ENCODE measurements at regions of chr11 and their contacts with region 1.

Region 1: GRCh38 chr11:73982969-73983740 is 512 bp upstream of the UCP2 start:
- DNase-seq: peak; percentile 89
- ATAC-seq: peak; percentile 85
- H3K4me3 ChIP-seq: peak overlapping the region; percentile 79
- H3K27ac ChIP-seq: peak overlapping the region; percentile 85
- H3K4me1 ChIP-seq: peaks cover 29% of the 10 kb centered on the region
- H3K27me3 ChIP-seq: no peaks in the 10 kb centered on the region
- CTCF ChIP-seq: no peak
- EP300 ChIP-seq: peak in 1 of 2 experiments; percentile 4; a peak in 1 of 4 replicates
- POLR2A ChIP-seq: peak; percentile 97
- RAD21 ChIP-seq: no peak

Region 2: GRCh38 chr11:73995247-73995646 is 12.1 kb after region 1 on chr11:
- CTCF ChIA-PET with region 1: interaction called, 9 read pairs
- POLR2A ChIA-PET with region 1: interaction called, 41 read pairs
- RAD21 ChIA-PET with region 1: interaction called, 47 read pairs
- SMC1A ChIA-PET with region 1: interaction called, 38 read pairs
- in situ Hi-C with region 1: no loop called
- intact Hi-C with region 1: no loop called
- DNase-seq: no peak
- ATAC-seq: peak; percentile 73
- H3K4me3 ChIP-seq: no peak overlapping the region
- H3K27ac ChIP-seq: peak overlapping the region; percentile 57
- H3K4me1 ChIP-seq: peaks cover 68% of the 10 kb centered on the region
- H3K27me3 ChIP-seq: no peaks in the 10 kb centered on the region
- CTCF ChIP-seq: no peak
- EP300 ChIP-seq: peak; percentile 36 to 77; a peak in 2 of 4 replicates
- POLR2A ChIP-seq: no peak
- RAD21 ChIP-seq: no peak

Region 3: DNA sequence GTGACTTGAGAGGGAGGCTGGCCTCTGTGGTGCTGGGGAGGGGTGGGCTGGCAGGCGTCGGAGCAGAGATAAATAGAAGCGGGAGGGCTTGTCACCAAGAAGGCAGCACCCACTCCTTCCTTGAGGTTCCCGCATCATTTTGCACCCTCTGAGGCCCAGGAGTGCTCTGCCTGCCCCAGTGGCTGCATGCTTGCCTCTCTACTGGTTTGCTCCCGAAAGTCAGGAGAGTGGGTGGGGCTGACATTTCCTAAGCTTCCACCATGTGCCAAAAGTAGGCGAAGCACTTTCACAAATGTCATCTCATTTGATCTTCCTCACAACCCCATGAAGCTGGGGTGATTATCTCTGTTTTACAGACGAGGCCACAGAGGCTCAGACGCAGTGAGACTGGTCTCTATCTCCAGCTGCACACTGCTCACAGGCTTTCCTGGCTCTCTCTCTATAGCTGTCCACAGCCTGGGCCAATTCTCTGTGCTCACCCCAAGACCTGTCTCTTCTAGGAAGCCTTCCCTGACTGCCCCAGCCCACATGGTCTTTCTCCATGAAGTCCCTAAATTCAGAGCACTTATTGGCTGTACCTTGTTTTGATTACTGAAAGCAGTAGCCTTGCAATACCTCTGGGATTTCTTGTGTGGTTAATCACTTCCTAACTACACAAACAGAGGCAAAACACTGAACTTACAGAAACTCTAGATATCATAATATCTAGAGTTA is 28.4 kb after region 1 on chr11:
- CTCF ChIA-PET with region 1: interaction called, 11 read pairs
- POLR2A ChIA-PET with region 1: interaction called, 3 read pairs
- RAD21 ChIA-PET with region 1: interaction called, 5 read pairs
- SMC1A ChIA-PET with region 1: interaction called, 19 read pairs
- in situ Hi-C with region 1: no loop called
- intact Hi-C with region 1: no loop called
- DNase-seq: peak; percentile 79
- ATAC-seq: peak; percentile 93
- H3K4me3 ChIP-seq: no peak overlapping the region
- H3K27ac ChIP-seq: peak overlapping the region; percentile 56
- H3K4me1 ChIP-seq: peaks cover 20% of the 10 kb centered on the region
- H3K27me3 ChIP-seq: no peaks in the 10 kb centered on the region
- CTCF ChIP-seq: no peak
- EP300 ChIP-seq: peak; percentile 63 to 94; a peak in 3 of 4 replicates
- POLR2A ChIP-seq: no peak
- RAD21 ChIP-seq: no peak

Region 4: DNA sequence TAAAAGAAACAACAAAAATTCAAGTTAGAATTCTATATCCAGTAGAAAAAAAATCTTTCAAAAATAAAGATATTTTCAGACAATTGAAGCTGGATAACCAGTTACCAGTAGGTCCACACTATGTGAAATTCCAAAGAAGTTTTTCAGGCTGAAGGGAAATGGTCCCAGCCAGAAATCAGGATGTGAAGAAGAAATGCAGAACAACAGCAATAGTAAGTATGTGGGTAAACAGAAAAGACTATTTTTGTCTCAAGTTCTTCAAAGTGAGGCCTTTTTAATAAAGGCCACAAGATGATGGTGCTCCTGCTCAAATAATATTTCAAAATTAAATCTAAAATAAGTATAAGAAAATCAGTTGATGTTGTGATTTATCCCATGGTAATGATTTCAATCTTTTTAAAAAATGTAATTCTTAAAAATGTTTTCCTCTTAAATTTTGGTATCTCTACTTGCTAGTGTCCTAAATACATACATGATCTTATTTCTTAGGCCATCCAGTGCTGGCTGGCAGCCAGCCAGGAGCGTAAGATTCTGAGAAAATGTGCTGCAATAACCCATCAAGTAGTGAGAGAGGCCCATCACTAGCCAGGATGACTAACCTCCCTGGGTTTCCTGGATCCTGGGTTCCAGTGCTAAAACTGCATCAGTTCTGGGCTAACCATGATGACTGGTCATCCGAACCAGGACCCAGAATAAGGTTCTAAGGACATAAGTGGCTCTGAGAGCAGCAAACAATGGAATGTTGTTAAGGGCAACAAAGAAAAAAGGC is 41.3 kb after region 1 on chr11:
- CTCF ChIA-PET with region 1: interaction called, 5 read pairs
- POLR2A ChIA-PET with region 1: interaction called, 20 read pairs
- RAD21 ChIA-PET with region 1: interaction called, 31 read pairs
- SMC1A ChIA-PET with region 1: interaction called, 49 read pairs
- in situ Hi-C with region 1: no loop called
- intact Hi-C with region 1: loop called (anchors 5 kb)
- DNase-seq: no peak
- ATAC-seq: no peak
- H3K4me3 ChIP-seq: no peak overlapping the region
- H3K27ac ChIP-seq: no peak overlapping the region
- H3K4me1 ChIP-seq: peaks cover 19% of the 10 kb centered on the region
- H3K27me3 ChIP-seq: no peaks in the 10 kb centered on the region
- CTCF ChIP-seq: no peak
- EP300 ChIP-seq: no peak
- POLR2A ChIP-seq: no peak
- RAD21 ChIP-seq: no peak

Measured in GM12878 (cell line).